Activated T-helper 1 cell treated with anti-CD3 and anti-CD28 coated beads, Interleukin-12 subunit alpha, Interleukin-12 subunit beta, Interleukin-2, Interleukin-4 antibody, amounts not matched to agents 30 ng/mL and 10 ng/mL and 1 ng/mL, durations not matched to agents 14 hours and 24 hours and 36 hours (primary cell): ENCODE measurements at regions of chr7 and their contacts with region 1.

Region 1: DNA sequence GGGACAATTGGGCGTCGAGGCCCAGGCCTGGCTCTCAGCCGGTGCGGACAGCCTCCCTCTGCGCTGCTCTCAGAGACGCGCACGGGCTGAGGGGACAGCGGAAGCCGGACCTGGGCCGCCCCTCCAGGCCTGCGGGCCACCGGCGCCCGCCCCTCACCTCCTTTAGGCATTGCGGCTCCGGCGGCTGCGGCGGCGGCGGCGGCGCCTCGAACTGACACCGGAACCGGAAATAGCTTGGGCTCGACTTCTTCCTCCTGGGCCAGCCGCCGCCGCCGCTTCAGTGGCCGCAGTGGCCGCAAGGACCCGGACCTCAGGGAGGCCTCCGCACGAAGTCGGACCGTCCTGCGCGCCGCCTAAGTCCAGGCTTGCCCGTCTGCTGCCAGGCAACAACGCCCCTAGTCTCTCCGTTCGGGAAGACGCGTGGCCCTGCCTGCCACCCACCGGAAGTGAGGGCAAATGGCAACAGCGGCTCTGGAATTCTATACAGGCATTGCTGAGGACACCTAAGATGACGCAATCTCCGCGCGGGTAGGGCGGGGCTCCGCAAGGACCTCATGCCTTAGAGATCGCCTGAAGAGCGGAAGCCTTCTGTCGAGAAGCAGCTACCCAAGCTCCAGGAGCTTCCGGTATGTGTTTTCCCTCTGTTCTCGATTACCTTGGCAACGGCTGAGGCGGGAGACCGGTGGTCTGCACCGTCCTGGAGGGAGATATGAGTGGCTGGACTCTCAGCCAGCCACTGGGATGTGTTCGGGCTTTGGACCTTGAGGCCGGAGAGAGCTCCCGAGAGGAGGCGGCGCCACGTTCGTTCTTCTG is at the starts of genes BUD31 and PDAP1:
- DNase-seq: peak; percentile 92
- H3K4me3 Mint-ChIP-seq: peak within 1 kb of the TSS; percentile 98
- H3K27ac Mint-ChIP-seq: peak within 1 kb of the TSS; percentile 98
- H3K4me1 Mint-ChIP-seq: peaks cover 43% of the 10 kb centered on the region
- H3K27me3 Mint-ChIP-seq: no peaks in the 10 kb centered on the region
- total RNA-seq, gene BUD31: 132 and 145 TPM in 2 replicates
- total RNA-seq, gene PDAP1: 160 and 162 TPM in 2 replicates

Region 2: GRCh38 chr7:99267481-99267840 is 141.1 kb before region 1 on chr7:
- intact Hi-C with region 1: no loop called
- DNase-seq: no peak
- H3K4me3 Mint-ChIP-seq: no peak overlapping the region
- H3K27ac Mint-ChIP-seq: no peak overlapping the region
- H3K4me1 Mint-ChIP-seq: no peaks in the 10 kb centered on the region
- H3K27me3 Mint-ChIP-seq: peaks cover 2% of the 10 kb centered on the region

Region 3: DNA sequence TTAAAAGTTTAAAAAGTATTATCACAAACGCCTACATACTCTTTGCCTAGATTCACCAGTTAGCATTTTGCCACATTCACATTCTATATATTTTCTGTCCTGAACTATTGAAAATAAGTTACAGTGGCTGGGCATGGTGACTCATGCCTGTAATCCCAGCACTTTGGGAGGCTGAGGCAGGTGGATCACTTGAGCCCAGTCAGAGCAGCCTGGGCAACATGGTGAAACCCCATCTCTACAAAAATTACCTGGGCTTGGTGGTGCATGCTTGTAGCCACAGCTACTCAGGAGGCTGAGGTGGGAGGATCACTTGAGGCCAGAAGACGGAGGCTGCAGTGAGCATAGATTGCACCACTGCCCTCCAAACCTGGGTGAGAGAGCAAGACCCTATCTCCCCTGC is 77.6 kb before region 1 on chr7:
- intact Hi-C with region 1: loop called (anchors 2 kb)
- DNase-seq: no peak
- H3K4me3 Mint-ChIP-seq: peak overlapping the region; percentile 11
- H3K27ac Mint-ChIP-seq: peak overlapping the region; percentile 81
- H3K4me1 Mint-ChIP-seq: peaks cover 53% of the 10 kb centered on the region
- H3K27me3 Mint-ChIP-seq: no peaks in the 10 kb centered on the region

Region 4: GRCh38 chr7:99380032-99380822 is 28.4 kb before region 1 on chr7:
- intact Hi-C with region 1: loop called (anchors 1 kb)
- DNase-seq: peak; percentile 26
- H3K4me3 Mint-ChIP-seq: peak overlapping the region; percentile 86
- H3K27ac Mint-ChIP-seq: peak overlapping the region; percentile 91
- H3K4me1 Mint-ChIP-seq: peaks cover 34% of the 10 kb centered on the region
- H3K27me3 Mint-ChIP-seq: no peaks in the 10 kb centered on the region

Region 5: DNA sequence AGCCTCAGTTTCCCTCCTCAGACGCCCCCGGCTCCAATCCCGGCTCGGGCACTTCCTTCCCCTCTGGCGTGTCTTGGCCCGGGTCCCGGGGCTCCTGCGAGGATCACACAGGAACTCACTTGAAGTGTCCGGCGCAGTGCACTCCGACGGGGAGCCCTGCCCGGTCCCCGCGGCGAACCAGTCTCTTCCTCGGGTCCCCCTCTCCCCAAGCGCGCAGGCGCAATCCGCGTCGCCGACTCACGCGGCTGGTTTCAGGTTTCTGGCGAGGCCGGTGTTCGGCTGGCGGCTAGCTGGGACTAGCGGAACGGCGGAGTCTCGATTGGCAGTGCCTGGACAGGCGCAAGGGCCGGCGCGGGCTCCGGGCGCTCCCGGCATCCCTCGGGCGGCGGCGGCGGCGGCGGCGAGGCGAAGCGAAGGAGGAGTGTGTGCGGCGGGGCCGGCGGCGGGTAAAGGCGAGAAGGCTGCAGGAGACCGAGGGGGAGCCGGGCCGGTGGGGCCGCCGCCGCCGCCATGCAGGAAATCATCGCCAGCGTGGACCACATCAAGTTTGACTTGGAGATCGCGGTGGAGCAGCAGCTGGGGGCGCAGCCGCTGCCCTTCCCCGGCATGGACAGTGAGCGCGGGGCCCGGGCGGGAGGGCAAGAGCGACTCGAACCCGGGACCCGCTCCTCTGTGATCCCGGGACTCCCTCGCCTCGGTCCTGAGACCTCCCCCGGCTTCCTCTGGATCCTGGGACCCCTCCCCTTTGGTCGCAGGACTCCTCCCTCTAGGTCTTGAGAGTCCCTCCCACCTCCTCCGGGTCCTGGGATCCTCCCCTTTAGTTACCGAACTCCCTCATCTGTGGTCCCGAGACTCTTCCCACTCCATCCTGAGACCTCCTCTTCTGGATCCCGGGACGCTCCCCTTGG is 30.2 kb after region 1 on chr7 and contains the starts of genes CPSF4 and PTCD1:
- intact Hi-C with region 1: loop called (anchors 1 kb)
- DNase-seq: peak; percentile 91
- H3K4me3 Mint-ChIP-seq: peak within 1 kb of the TSS; percentile 98
- H3K27ac Mint-ChIP-seq: peak within 1 kb of the TSS; percentile 88
- H3K4me1 Mint-ChIP-seq: peaks cover 28% of the 10 kb centered on the region
- H3K27me3 Mint-ChIP-seq: no peaks in the 10 kb centered on the region
- total RNA-seq, gene CPSF4: 92.3 and 93.2 TPM in 2 replicates
- total RNA-seq, gene PTCD1: 13.7 and 16.0 TPM in 2 replicates

Region 6: DNA sequence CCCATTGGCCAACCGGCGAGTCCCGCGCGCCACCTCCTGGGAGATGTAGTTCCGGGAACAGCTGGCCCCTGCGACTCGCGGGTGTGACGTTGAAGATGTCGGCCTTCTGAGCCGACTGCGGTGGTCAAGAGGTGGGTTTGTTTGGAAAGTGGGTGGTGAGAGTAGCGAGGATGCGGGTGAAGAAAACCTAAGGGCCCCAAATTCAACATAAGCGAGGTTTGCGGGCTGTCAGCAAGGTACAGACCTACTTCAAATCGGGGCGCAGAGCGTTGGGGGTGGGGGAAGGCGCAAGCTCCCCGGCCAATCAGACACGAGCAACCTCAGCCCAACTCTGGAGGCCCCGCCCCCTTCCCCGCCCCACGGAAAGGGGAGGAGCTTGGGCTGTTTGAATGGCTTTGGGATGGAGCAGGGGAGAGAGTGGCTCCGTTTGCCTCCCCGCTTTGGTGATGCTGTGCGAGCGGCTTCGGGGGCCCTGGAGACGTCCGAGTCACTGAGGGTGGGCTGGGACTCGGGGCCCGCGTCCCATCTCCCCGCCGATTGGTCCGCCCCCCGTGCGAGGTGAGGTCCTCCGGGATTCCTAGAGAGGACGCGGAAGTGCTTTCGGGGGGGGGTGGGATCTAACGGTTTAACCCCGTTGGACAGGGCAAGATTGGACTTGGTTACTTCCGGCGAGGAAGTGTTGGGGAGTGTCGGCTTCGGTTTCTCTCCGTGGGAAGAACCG is 96.2 kb after region 1 on chr7 and contains the start of gene ZKSCAN5:
- intact Hi-C with region 1: loop called (anchors 1 kb)
- DNase-seq: peak; percentile 96
- H3K4me3 Mint-ChIP-seq: peak within 1 kb of the TSS; percentile 90
- H3K27ac Mint-ChIP-seq: peak within 1 kb of the TSS; percentile 96
- H3K4me1 Mint-ChIP-seq: peaks cover 19% of the 10 kb centered on the region
- H3K27me3 Mint-ChIP-seq: no peaks in the 10 kb centered on the region
- total RNA-seq, gene ZKSCAN5: 8.0 and 8.1 TPM in 2 replicates

Region 7: GRCh38 chr7:99827040-99827778 is 418.6 kb after region 1 on chr7:
- intact Hi-C with region 1: no loop called
- DNase-seq: no peak
- H3K4me3 Mint-ChIP-seq: no peak overlapping the region
- H3K27ac Mint-ChIP-seq: no peak overlapping the region
- H3K4me1 Mint-ChIP-seq: no peaks in the 10 kb centered on the region
- H3K27me3 Mint-ChIP-seq: peaks cover 1% of the 10 kb centered on the region

Region 8: DNA sequence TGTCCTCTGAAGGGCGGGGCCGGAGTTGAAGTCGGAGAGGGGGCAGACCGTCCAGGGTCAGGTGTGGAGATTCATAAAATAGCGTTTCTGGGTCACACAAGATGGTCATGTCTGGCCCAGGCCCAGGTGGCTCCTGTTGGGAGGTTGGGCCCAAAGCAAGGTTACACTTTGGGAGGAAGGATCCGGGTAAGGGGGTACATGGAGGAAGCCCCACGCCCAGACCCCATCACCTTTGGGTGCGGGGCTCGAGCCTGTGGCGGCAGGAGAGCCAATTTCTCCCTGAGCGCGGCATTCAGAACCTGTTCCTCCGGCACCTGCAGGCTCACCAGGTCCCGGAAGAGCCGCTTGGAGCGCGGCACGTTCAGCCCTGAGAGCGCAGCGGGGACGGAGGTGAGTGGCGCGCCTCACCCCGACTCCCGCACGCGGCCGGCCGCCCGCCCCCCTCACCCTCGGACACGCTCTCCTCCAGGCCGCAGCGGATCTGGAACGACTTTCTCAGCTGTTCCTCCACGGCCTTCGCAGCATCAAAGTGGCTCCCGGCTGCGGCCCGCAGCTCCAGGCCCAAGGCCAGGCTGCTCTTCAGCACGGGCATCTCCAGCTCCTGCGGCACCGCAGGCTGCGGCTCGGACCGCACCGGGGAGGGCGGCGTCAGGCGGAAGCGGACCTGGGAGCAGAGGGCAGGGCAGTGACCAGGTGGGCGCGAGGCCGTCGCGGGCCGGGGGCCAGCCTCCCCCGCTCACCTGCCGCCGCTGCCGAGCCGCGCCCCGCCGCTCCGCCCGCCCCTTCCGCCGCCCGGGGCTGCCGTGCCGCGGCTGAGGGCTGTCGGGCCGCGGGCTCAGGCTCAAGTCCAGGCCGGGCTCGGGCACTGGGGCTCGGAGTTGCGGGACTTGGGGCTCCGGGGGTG is 1027.1 kb after region 1 on chr7:
- intact Hi-C with region 1: loop called (anchors 1 kb)
- DNase-seq: peak; percentile 42
- H3K4me3 Mint-ChIP-seq: peak overlapping the region; percentile 94
- H3K27ac Mint-ChIP-seq: peak overlapping the region; percentile 88
- H3K4me1 Mint-ChIP-seq: peaks cover 41% of the 10 kb centered on the region
- H3K27me3 Mint-ChIP-seq: no peaks in the 10 kb centered on the region